WTC11 (cell line): ENCODE measurements at regions of chr11 and their contacts with region 1.

Region 1: DNA sequence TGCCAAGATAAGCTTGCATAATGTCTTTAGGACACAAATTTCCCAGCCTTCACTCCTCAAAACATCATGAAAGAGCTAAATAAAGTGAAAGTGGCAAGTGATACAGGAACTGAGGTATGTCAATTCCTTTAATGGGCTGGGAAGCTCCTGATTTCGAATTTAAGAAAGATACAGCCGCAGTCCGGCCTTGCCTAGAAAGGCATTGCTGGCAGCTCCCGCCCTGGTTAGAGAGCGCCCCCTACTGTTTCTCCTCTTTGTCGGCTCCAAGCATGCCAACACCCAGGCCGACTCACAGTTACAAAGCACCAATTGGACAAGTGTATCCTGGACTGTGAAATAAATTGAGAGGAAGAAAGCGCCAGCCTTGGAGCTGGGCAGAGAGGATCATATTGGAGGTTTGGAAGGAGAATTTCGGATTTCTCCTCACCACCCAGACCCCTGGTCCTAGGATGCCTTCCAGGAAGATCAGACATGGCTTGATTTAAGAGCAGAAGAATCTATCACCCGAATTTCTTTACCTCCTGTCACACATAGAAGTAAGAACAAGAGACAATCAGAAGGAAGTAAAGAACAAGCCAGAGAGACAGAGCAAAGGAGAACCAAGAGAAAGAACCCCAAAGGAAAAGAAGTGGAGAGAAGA is 84.0 kb downstream of the FAM76B start:
- DNase-seq: peak; percentile 87
- ATAC-seq: peak; percentile 99
- H3K4me3 Mint-ChIP-seq: no peak overlapping the region
- H3K27ac Mint-ChIP-seq: no peak overlapping the region
- H3K4me1 Mint-ChIP-seq: no peaks in the 10 kb centered on the region
- H3K27me3 Mint-ChIP-seq: peaks cover 2% of the 10 kb centered on the region; the same call in 1 of the 2 replicates
- CTCF ChIP-seq: peak; percentile 91

Region 2: GRCh38 chr11:95371153-95371552 is 334.5 kb before region 1 on chr11:
- CTCF ChIA-PET with region 1: interaction called, 11 read pairs
- POLR2A ChIA-PET with region 1: no interaction called
- DNase-seq: no peak
- ATAC-seq: no peak
- H3K4me3 Mint-ChIP-seq: no peak overlapping the region
- H3K27ac Mint-ChIP-seq: no peak overlapping the region
- H3K4me1 Mint-ChIP-seq: peaks cover 23% of the 10 kb centered on the region
- H3K27me3 Mint-ChIP-seq: no peaks in the 10 kb centered on the region; the same call in 1 of the 2 replicates
- CTCF ChIP-seq: no peak

Region 3: GRCh38 chr11:95545116-95545875 is 160.3 kb before region 1 on chr11:
- CTCF ChIA-PET with region 1: interaction called, 12 read pairs
- POLR2A ChIA-PET with region 1: no interaction called
- DNase-seq: peak; percentile 14
- ATAC-seq: peak; percentile 59
- H3K4me3 Mint-ChIP-seq: no peak overlapping the region
- H3K27ac Mint-ChIP-seq: no peak overlapping the region
- H3K4me1 Mint-ChIP-seq: no peaks in the 10 kb centered on the region
- H3K27me3 Mint-ChIP-seq: no peaks in the 10 kb centered on the region; the same call in 1 of the 2 replicates
- CTCF ChIP-seq: no peak

Region 4: GRCh38 chr11:95592471-95592870 is 113.1 kb before region 1 on chr11:
- CTCF ChIA-PET with region 1: interaction called, 11 read pairs
- POLR2A ChIA-PET with region 1: no interaction called
- DNase-seq: peak; percentile 44
- ATAC-seq: peak; percentile 98
- H3K4me3 Mint-ChIP-seq: no peak overlapping the region
- H3K27ac Mint-ChIP-seq: no peak overlapping the region
- H3K4me1 Mint-ChIP-seq: peaks cover 10% of the 10 kb centered on the region
- H3K27me3 Mint-ChIP-seq: no peaks in the 10 kb centered on the region
- CTCF ChIP-seq: no peak

Region 5: GRCh38 chr11:95692526-95693260 is 12.9 kb before region 1 on chr11:
- CTCF ChIA-PET with region 1: interaction called, 17 read pairs
- POLR2A ChIA-PET with region 1: no interaction called
- DNase-seq: no peak
- ATAC-seq: no peak
- H3K4me3 Mint-ChIP-seq: no peak overlapping the region
- H3K27ac Mint-ChIP-seq: no peak overlapping the region
- H3K4me1 Mint-ChIP-seq: peaks cover 5% of the 10 kb centered on the region
- H3K27me3 Mint-ChIP-seq: no peaks in the 10 kb centered on the region
- CTCF ChIP-seq: no peak

Region 6: GRCh38 chr11:95739108-95739938 is 33.7 kb after region 1 on chr11:
- CTCF ChIA-PET with region 1: interaction called, 11 read pairs
- POLR2A ChIA-PET with region 1: no interaction called
- DNase-seq: no peak
- ATAC-seq: peak; percentile 65; the same call in 1 of the 2 replicates
- H3K4me3 Mint-ChIP-seq: no peak overlapping the region
- H3K27ac Mint-ChIP-seq: no peak overlapping the region
- H3K4me1 Mint-ChIP-seq: no peaks in the 10 kb centered on the region
- H3K27me3 Mint-ChIP-seq: no peaks in the 10 kb centered on the region
- CTCF ChIP-seq: no peak